CD8-positive, alpha-beta T cell (primary cell): ENCODE measurements at regions of chr3 and their contacts with region 1.

Region 1: DNA sequence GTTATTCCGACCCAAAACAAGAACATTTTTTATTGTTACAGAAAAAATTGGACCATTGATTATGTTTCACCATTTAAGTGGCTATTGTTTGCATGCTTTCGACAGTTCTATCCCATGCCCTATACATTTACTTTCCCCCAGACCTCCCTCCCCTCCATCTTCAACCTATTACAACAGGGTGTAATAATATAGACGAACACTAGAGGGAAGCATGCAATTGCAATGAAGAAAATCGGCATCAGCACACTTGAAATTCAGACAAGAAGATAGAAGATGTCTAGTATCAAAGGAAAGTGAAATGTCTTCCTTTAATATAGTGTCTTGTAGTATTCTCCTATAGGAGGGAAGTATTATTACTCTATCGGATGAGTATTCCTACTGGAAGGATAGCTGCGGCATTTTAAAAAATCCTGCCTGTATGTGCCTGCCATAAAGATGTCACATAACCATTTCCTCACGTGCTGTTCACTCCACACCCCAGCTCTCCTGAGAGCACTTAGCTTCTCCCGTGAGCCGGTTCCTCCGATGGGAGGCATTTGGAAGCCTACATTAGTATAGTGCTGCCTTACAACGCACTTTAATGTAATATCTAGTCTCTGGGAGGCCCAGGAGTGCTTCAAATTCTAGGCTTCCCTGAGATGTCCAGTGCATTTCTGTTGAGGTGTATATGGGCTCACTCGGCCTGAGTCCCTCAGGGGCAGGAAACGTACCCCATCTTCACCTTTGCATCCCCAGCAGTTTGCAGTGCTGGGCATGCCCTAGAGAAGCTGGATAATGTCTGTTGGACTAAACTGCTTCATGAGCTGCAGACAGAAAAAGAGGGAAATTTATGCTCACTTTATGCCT is 17.8 kb upstream of the ERICH6 start:
- DNase-seq: peak in 2 of 9 experiments; percentile 73 to 80
- ATAC-seq: peak; percentile 91
- H3K4me3 ChIP-seq: no peak overlapping the region
- H3K4me3 Mint-ChIP-seq: no peak overlapping the region
- H3K27ac ChIP-seq: no peak overlapping the region
- H3K27ac Mint-ChIP-seq: no peak overlapping the region
- H3K4me1 ChIP-seq: no peaks in the 10 kb centered on the region
- H3K4me1 Mint-ChIP-seq: peaks cover 8% of the 10 kb centered on the region
- H3K27me3 ChIP-seq: no peaks in the 10 kb centered on the region
- H3K27me3 Mint-ChIP-seq: no peaks in the 10 kb centered on the region
- CTCF ChIP-seq: peak; percentile 90

Region 2: DNA sequence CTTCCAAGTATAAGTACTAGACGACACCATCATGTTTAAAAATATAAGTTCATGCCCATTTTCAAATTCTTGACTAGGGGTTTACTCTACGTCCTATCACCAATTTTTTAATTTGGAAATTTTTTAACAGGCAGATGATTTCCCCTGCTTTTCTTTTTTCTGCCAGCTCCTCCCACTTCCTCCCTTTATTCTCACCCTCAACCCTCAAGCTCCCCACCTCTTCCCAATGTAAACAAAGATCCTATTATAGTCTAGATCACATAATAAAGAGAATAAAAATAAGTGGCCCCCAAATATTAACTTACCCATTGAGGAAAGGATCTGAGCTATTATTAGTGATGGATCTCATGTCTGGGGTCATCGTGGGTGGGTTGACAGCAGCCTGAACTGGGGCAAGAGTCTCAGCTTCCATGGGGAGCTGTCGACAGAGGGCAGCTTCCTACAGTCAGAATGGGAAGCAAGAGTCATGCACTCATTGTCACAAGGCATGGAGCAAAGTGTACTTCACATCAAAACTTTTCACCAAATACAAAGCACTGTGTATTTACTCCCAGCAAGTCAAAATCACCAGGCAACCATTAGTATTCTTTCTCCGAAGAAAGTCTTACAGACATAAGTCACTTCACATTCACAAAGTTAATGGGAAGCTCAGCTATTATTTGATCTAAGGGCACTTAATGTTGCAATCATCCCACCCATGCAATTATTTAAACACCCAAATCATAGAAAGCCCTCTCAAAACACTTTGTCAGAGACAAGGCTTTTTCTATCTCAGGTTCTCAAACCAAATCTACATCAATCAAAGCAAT is 1193.8 kb before region 1 on chr3:
- CTCF ChIA-PET with region 1: no interaction called
- POLR2A ChIA-PET with region 1: no interaction called
- intact Hi-C with region 1: no loop called
- DNase-seq: peak in 1 of 9 experiments; percentile 32
- ATAC-seq: no peak
- H3K4me3 ChIP-seq: no peak overlapping the region
- H3K4me3 Mint-ChIP-seq: no peak overlapping the region
- H3K27ac ChIP-seq: no peak overlapping the region
- H3K27ac Mint-ChIP-seq: no peak overlapping the region
- H3K4me1 ChIP-seq: no peaks in the 10 kb centered on the region
- H3K4me1 Mint-ChIP-seq: peaks cover 5% of the 10 kb centered on the region
- H3K27me3 ChIP-seq: no peaks in the 10 kb centered on the region
- H3K27me3 Mint-ChIP-seq: peaks cover 13% of the 10 kb centered on the region
- CTCF ChIP-seq: no peak

Region 3: DNA sequence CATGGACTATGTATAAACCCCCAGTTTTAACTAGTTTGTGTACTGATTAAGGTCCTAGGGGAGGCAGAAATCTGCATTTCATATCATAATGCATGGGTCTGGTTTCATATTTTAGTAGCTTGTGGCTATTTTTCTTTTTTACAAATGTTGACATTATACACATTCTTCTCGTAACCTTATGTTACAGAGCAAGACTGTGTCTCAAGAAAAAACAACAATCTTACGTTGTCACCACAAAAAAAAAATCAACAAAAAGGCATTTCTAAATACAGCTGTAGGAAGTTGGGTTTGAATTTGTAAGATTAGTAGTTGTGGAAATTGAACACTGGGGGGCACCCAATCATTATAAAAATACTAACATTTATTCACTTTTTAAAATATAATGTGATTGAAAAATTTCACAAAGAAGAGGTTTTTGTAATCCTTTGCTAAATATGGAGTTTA is 193.1 kb before region 1 on chr3:
- CTCF ChIA-PET with region 1: no interaction called
- POLR2A ChIA-PET with region 1: no interaction called
- intact Hi-C with region 1: loop called (anchors 5 kb)
- DNase-seq: peak in 2 of 9 experiments; percentile 45 to 50
- ATAC-seq: peak; percentile 54
- H3K4me3 ChIP-seq: no peak overlapping the region
- H3K4me3 Mint-ChIP-seq: no peak overlapping the region
- H3K27ac ChIP-seq: no peak overlapping the region
- H3K27ac Mint-ChIP-seq: no peak overlapping the region
- H3K4me1 ChIP-seq: no peaks in the 10 kb centered on the region
- H3K4me1 Mint-ChIP-seq: no peaks in the 10 kb centered on the region
- H3K27me3 ChIP-seq: no peaks in the 10 kb centered on the region
- H3K27me3 Mint-ChIP-seq: no peaks in the 10 kb centered on the region
- CTCF ChIP-seq: peak; percentile 67

Region 4: DNA sequence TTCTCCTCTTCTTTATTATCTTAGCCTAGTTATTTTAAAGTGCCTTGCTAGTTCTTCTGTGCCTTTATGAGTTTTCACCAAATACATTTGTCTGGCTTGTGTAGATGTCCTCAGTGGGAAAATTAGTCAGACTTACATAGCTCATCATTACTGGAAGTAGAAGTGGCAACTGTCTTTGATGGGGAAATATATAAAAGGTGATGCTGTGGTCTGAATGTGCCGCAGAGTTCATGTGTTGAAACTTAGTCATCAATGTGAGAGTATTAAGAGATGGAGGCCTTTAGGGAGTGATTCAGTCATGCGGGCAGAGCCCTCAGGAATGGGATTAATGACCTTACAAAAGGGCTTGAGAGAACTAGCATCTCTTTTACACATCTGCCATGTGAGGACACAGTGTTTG is 11.4 kb before region 1 on chr3:
- CTCF ChIA-PET with region 1: interaction called, 15 read pairs
- POLR2A ChIA-PET with region 1: no interaction called
- intact Hi-C with region 1: no loop called
- DNase-seq: no peak
- ATAC-seq: no peak
- H3K4me3 ChIP-seq: no peak overlapping the region
- H3K4me3 Mint-ChIP-seq: no peak overlapping the region
- H3K27ac ChIP-seq: no peak overlapping the region
- H3K27ac Mint-ChIP-seq: no peak overlapping the region
- H3K4me1 ChIP-seq: no peaks in the 10 kb centered on the region
- H3K4me1 Mint-ChIP-seq: peaks cover 9% of the 10 kb centered on the region
- H3K27me3 ChIP-seq: no peaks in the 10 kb centered on the region
- H3K27me3 Mint-ChIP-seq: no peaks in the 10 kb centered on the region
- CTCF ChIP-seq: no peak

Region 5: DNA sequence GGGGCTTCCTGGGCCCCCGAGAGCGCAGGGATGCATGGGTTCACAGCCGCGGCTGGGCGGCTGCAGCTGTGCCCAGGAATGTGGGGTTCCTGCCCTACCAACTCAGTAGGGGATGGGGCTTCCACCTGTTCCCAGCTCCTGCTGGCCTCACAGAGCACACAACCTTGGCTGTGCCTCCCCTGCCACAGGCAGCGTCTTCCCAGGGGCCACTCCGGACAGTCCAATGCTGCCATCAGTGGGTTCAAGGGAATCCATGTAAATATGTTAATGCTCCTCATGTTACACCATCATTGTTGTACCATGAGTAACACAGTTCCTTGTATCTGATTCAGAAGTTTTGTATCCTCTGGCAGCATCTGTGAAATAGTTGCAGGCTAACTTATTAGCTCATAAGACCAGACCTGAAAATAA is 53.6 kb after region 1 on chr3:
- CTCF ChIA-PET with region 1: interaction called, 10 read pairs
- POLR2A ChIA-PET with region 1: no interaction called
- intact Hi-C with region 1: no loop called
- DNase-seq: no peak
- ATAC-seq: no peak
- H3K4me3 ChIP-seq: no peak overlapping the region
- H3K4me3 Mint-ChIP-seq: no peak overlapping the region
- H3K27ac ChIP-seq: no peak overlapping the region
- H3K27ac Mint-ChIP-seq: no peak overlapping the region
- H3K4me1 ChIP-seq: no peaks in the 10 kb centered on the region
- H3K4me1 Mint-ChIP-seq: no peaks in the 10 kb centered on the region
- H3K27me3 ChIP-seq: no peaks in the 10 kb centered on the region
- H3K27me3 Mint-ChIP-seq: peaks cover 4% of the 10 kb centered on the region
- CTCF ChIP-seq: no peak

Region 6: GRCh38 chr3:150787741-150788370 is 66.3 kb after region 1 on chr3:
- CTCF ChIA-PET with region 1: interaction called, 19 read pairs
- POLR2A ChIA-PET with region 1: interaction called, 3 read pairs
- intact Hi-C with region 1: loop called (anchors 1 to 2 kb)
- DNase-seq: peak; percentile 52 to 83 (median 80)
- ATAC-seq: peak; percentile 86
- H3K4me3 ChIP-seq: no peak overlapping the region
- H3K4me3 Mint-ChIP-seq: no peak overlapping the region
- H3K27ac ChIP-seq: no peak overlapping the region
- H3K27ac Mint-ChIP-seq: no peak overlapping the region
- H3K4me1 ChIP-seq: no peaks in the 10 kb centered on the region
- H3K4me1 Mint-ChIP-seq: peaks cover 3% of the 10 kb centered on the region
- H3K27me3 ChIP-seq: no peaks in the 10 kb centered on the region
- H3K27me3 Mint-ChIP-seq: peaks cover 3% of the 10 kb centered on the region
- CTCF ChIP-seq: peak; percentile 98

Region 7: GRCh38 chr3:150861851-150862250 is 140.3 kb after region 1 on chr3:
- CTCF ChIA-PET with region 1: interaction called, 36 read pairs
- POLR2A ChIA-PET with region 1: no interaction called
- intact Hi-C with region 1: loop called in 1 of 2 experiments (anchors 1 kb)
- DNase-seq: no peak
- ATAC-seq: no peak
- H3K4me3 ChIP-seq: no peak overlapping the region
- H3K4me3 Mint-ChIP-seq: no peak overlapping the region
- H3K27ac ChIP-seq: no peak overlapping the region
- H3K27ac Mint-ChIP-seq: no peak overlapping the region
- H3K4me1 ChIP-seq: no peaks in the 10 kb centered on the region
- H3K4me1 Mint-ChIP-seq: peaks cover 4% of the 10 kb centered on the region
- H3K27me3 ChIP-seq: no peaks in the 10 kb centered on the region
- H3K27me3 Mint-ChIP-seq: peaks cover 17% of the 10 kb centered on the region
- CTCF ChIP-seq: no peak

Region 8: GRCh38 chr3:150870396-150870795 is 148.9 kb after region 1 on chr3:
- CTCF ChIA-PET with region 1: interaction called, 36 read pairs
- POLR2A ChIA-PET with region 1: no interaction called
- intact Hi-C with region 1: loop called in 1 of 2 experiments (anchors 1 kb)
- DNase-seq: no peak
- ATAC-seq: no peak
- H3K4me3 ChIP-seq: no peak overlapping the region
- H3K4me3 Mint-ChIP-seq: no peak overlapping the region
- H3K27ac ChIP-seq: no peak overlapping the region
- H3K27ac Mint-ChIP-seq: no peak overlapping the region
- H3K4me1 ChIP-seq: no peaks in the 10 kb centered on the region
- H3K4me1 Mint-ChIP-seq: peaks cover under 1% of the 10 kb centered on the region
- H3K27me3 ChIP-seq: no peaks in the 10 kb centered on the region
- H3K27me3 Mint-ChIP-seq: peaks cover 14% of the 10 kb centered on the region
- CTCF ChIP-seq: no peak